Esophagus muscularis mucosa (tissue), 4 donors: ENCODE measurements at regions of chr6 and their contacts with region 1.

Region 1: DNA sequence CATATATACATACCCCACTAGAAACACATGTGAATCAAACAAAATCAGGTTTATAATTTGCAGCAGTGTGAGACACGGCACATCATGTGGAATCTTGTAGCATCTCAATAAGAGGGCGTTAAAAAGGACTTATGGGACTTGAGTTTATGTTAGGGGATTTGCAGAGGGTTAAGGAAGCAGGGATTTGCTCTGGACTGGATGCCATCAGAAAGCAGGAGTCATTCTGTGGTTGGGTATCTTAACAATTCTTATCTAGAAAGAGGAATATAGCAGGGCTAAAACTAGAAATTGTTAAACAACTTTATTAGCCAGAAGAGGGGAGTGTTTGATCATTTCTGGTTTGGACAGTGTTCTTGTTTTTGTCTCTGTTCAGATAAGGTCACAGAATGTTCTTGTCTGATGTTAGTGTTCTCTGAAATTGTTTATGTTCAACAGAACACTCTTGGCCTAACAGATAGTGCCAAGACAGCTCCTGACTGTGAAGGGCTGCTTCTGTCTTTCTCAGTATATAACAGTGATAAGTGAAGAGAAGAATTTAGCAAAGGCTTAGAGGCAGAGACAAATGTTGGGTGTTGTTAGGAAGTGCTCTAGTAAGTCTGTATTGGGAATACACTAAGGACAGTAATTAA is 39.2 kb downstream of the LIN28B start:
- DNase-seq: no peak
- H3K4me3 ChIP-seq: no peak overlapping the region
- H3K27ac ChIP-seq: peak overlapping the region; percentile 62 to 78 (median 71)
- H3K4me1 ChIP-seq: peaks cover 4 to 24% (median 21%) of the 10 kb centered on the region in 4 donors
- H3K27me3 ChIP-seq: no peaks in the 10 kb centered on the region
- CTCF ChIP-seq: peak; percentile 30 to 50 (median 46)
- EP300 ChIP-seq: no peak
- POLR2A ChIP-seq: no peak

Region 2: GRCh38 chr6:105077596-105078385 is 81.7 kb after region 1 on chr6:
- intact Hi-C with region 1: loop called (anchors 2 kb)
- DNase-seq: no peak
- H3K4me3 ChIP-seq: no peak overlapping the region
- H3K27ac ChIP-seq: no peak overlapping the region
- H3K4me1 ChIP-seq: peaks cover 0 to 25% (median 22%) of the 10 kb centered on the region in 4 donors
- H3K27me3 ChIP-seq: no peaks in the 10 kb centered on the region
- CTCF ChIP-seq: peak; percentile 50 to 55 (median 53)
- EP300 ChIP-seq: no peak
- POLR2A ChIP-seq: no peak

Region 3: DNA sequence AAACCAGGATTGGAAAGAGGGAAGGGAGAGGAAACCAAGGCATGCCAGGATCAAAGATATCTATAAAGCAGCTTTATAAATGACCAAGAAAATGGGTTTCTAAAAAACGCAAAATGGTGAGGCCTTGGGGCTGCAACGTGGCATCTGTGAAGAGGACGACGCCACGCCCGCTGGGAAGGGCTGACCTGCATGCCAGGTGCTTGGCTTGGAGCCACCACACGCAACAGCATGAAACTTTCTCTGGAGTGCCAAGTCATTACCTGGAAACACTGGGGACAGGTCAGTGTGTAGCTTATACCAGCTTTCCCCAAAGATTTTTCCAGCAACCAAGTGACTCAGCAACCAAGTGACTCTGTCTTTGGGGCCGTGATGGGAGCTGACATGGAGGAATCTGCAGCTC is 101.2 kb after region 1 on chr6:
- intact Hi-C with region 1: no loop called
- DNase-seq: peak; percentile 74
- H3K4me3 ChIP-seq: no peak overlapping the region
- H3K27ac ChIP-seq: no peak overlapping the region
- H3K4me1 ChIP-seq: no peaks in the 10 kb centered on the region
- H3K27me3 ChIP-seq: no peaks in the 10 kb centered on the region
- CTCF ChIP-seq: no peak
- EP300 ChIP-seq: no peak
- POLR2A ChIP-seq: no peak